KBM-7 (cell line): ENCODE measurements at regions of chr20 and their contacts with region 1.

Region 1: GRCh38 chr20:57089691-57090150 is 176.7 kb downstream of the BMP7 start:
- DNase-seq: peak; percentile 49

Region 2: GRCh38 chr20:56595746-56596478 is 493.8 kb before region 1 on chr20:
- in situ Hi-C with region 1: no loop called
- DNase-seq: no peak

Region 3: DNA sequence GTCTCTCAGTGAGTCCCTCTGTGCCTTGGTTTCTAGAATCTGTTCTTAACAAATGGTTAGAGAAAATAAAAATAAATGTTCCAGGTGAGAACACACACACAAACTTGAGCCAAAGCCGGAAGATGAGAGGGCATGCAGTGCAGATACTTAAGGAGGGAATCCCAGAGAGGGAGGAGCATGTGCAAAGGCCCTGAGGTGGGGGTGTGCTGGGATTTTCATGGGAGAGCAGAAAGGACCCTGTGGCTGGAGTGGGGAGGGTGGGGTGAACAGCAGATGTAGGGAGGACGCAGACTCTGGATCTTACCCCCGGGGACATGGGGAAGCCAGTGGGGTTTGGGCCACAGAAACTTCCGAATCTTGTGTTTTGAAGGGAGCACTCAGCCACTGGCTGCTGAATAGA is 443.1 kb before region 1 on chr20:
- in situ Hi-C with region 1: no loop called
- DNase-seq: no peak

Region 4: GRCh38 chr20:57329608-57330221 is 240.0 kb after region 1 on chr20 and contains the start of gene SPO11:
- in situ Hi-C with region 1: loop called (anchors 10 kb)
- DNase-seq: no peak

Region 5: DNA sequence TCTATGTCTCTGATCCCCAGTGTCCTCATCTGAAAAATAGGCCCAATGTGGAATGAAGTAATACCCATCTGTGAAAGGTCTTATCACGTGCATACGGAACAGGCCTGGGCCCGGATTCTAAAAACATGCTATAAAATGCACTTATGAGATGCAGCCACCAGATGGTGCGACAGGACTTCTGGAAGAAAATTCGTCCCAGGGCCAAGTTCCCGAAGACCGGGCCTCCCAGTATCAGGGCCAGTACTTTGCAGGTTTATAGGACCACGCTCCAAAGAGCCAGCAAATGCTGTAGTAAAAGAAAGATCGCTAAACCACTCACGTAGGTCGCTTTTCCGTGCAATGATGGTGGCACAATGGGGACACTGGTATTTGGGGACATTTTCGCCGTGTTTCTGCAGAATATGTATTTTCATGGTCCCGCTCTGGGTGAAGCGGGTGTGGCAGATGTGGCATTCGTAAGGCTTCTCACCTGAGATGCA is 424.6 kb after region 1 on chr20:
- in situ Hi-C with region 1: loop called (anchors 25 kb)
- DNase-seq: peak; percentile 60

Region 6: GRCh38 chr20:58179432-58180099 is 1089.8 kb after region 1 on chr20:
- in situ Hi-C with region 1: loop called (anchors 25 kb)
- DNase-seq: peak; percentile 68